Lower lobe of right lung (tissue), 2 donors: ENCODE measurements at regions of chr13 and their contacts with region 1.

Region 1: GRCh38 chr13:32315238-32316027 is at the starts of genes BRCA2 and ZAR1L:
- DNase-seq: peak; percentile 96
- ATAC-seq: peak; percentile 98 to 99
- H3K4me3 ChIP-seq: peak within 1 kb of the TSS; percentile 91
- H3K27ac ChIP-seq: peak within 1 kb of the TSS; percentile 97
- H3K4me1 ChIP-seq: no peaks in the 10 kb centered on the region
- H3K27me3 ChIP-seq: no peaks in the 10 kb centered on the region
- CTCF ChIP-seq: peak; percentile 6
- total RNA-seq, gene BRCA2: 2.4 TPM
- total RNA-seq, gene ZAR1L: not detected

Region 2: GRCh38 chr13:31862828-31863227 is 452.6 kb before region 1 on chr13:
- intact Hi-C with region 1: no loop called
- DNase-seq: no peak
- ATAC-seq: no peak
- H3K4me3 ChIP-seq: no peak overlapping the region
- H3K27ac ChIP-seq: no peak overlapping the region
- H3K4me1 ChIP-seq: no peaks in the 10 kb centered on the region
- H3K27me3 ChIP-seq: no peaks in the 10 kb centered on the region
- CTCF ChIP-seq: no peak

Region 3: GRCh38 chr13:31909864-31910551 is 405.4 kb before region 1 on chr13:
- intact Hi-C with region 1: loop called (anchors 10 kb)
- DNase-seq: no peak
- ATAC-seq: peak; percentile 80 to 82
- H3K4me3 ChIP-seq: no peak overlapping the region
- H3K27ac ChIP-seq: peak overlapping the region; percentile 3
- H3K4me1 ChIP-seq: peaks cover 28% of the 10 kb centered on the region
- H3K27me3 ChIP-seq: no peaks in the 10 kb centered on the region
- CTCF ChIP-seq: peak; percentile 92

Region 4: DNA sequence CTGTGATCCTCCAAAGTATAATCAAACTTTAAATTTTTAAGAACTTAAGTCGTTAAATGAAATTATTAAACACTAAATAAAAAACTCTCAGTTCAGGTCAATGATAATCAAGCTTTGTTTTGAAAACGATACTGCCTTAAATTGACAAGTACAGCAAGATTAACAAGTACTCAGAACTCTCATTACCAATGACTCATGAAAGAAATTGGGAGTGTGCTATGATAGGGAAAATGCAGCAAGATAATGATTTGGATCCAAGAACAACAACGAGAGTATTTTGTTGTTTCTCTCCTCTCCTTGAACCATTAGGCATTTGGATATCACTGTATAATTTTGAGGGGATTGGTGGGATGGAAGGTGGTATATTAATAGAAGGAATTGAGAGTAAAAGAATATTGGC is 212.9 kb after region 1 on chr13:
- intact Hi-C with region 1: no loop called
- DNase-seq: no peak
- ATAC-seq: no peak
- H3K4me3 ChIP-seq: no peak overlapping the region
- H3K27ac ChIP-seq: no peak overlapping the region
- H3K4me1 ChIP-seq: peaks cover 39% of the 10 kb centered on the region
- H3K27me3 ChIP-seq: no peaks in the 10 kb centered on the region
- CTCF ChIP-seq: no peak

Region 5: GRCh38 chr13:32687275-32687674 is 371.8 kb after region 1 on chr13:
- intact Hi-C with region 1: no loop called
- DNase-seq: no peak
- ATAC-seq: no peak
- H3K4me3 ChIP-seq: no peak overlapping the region
- H3K27ac ChIP-seq: no peak overlapping the region
- H3K4me1 ChIP-seq: no peaks in the 10 kb centered on the region
- H3K27me3 ChIP-seq: no peaks in the 10 kb centered on the region
- CTCF ChIP-seq: no peak